B cell (primary cell): ENCODE measurements at regions of chr6 and their contacts with region 1.

Region 1: DNA sequence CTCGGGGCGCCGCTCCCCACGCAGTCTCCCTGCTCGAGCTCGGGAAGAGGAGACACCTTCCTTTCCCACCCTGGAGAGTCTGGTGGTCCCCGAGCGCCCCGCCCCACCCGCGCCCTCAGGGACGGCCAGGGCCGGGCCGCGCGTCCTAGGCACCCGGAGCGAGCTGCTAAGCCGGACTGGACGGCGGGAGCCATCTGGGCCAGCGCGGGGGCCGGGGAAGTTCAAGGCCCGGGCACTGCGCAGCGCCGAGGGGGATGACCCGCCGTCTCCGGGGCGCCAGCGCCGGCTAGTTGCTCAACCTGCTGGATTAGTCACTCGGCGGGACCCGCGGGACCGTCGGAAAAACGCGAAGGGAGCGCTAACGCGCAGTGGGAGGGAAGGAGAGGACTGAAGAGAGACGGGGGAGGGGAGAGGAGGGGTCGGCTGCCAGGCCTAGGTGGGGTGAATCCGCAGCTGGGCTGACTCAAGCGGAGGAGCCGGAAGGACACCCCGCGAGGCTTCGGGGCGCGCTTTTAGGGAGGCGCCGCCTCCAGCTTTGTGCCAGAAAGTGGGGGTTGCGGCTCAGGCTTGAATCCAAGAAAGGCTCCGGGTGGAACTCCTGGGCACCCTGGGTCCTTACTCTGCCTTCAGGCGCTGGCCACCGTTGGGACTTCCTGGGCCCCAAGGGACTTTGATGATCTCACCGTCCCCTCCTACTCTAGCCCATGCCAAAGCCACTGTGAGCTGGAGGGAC is 75.7 kb upstream of the FOXP4 start:
- DNase-seq: no peak
- ATAC-seq: peak; percentile 31
- H3K4me3 ChIP-seq: peak overlapping the region in 3 of 5 experiments; percentile 29 to 34 (median 33)
- H3K4me3 Mint-ChIP-seq: peak overlapping the region; percentile 73
- H3K27ac ChIP-seq: no peak overlapping the region
- H3K27ac Mint-ChIP-seq: no peak overlapping the region
- H3K4me1 ChIP-seq: peaks cover 13 to 15% of the 10 kb centered on the region in 2 donors
- H3K4me1 Mint-ChIP-seq: peaks cover 9% of the 10 kb centered on the region
- H3K27me3 ChIP-seq: peaks cover 0 to 50% (median 14%) of the 10 kb centered on the region in 4 experiments
- H3K27me3 Mint-ChIP-seq: peaks cover 76% of the 10 kb centered on the region
- CTCF ChIP-seq: no peak

Region 2: GRCh38 chr6:41487860-41488432 is 17.4 kb after region 1 on chr6:
- CTCF ChIA-PET with region 1: no interaction called
- POLR2A ChIA-PET with region 1: interaction called, 12 read pairs
- intact Hi-C with region 1: no loop called
- DNase-seq: no peak
- ATAC-seq: no peak
- H3K4me3 ChIP-seq: no peak overlapping the region
- H3K4me3 Mint-ChIP-seq: no peak overlapping the region
- H3K27ac ChIP-seq: no peak overlapping the region
- H3K27ac Mint-ChIP-seq: no peak overlapping the region
- H3K4me1 ChIP-seq: peaks cover 8 to 11% of the 10 kb centered on the region in 2 donors
- H3K4me1 Mint-ChIP-seq: peaks cover 11% of the 10 kb centered on the region
- H3K27me3 ChIP-seq: peaks cover 0 to 4% (median 0%) of the 10 kb centered on the region in 4 experiments
- H3K27me3 Mint-ChIP-seq: no peaks in the 10 kb centered on the region
- CTCF ChIP-seq: no peak